ENCODE measurements at regions of chr2 and their contacts with region 1.

Region 1: DNA sequence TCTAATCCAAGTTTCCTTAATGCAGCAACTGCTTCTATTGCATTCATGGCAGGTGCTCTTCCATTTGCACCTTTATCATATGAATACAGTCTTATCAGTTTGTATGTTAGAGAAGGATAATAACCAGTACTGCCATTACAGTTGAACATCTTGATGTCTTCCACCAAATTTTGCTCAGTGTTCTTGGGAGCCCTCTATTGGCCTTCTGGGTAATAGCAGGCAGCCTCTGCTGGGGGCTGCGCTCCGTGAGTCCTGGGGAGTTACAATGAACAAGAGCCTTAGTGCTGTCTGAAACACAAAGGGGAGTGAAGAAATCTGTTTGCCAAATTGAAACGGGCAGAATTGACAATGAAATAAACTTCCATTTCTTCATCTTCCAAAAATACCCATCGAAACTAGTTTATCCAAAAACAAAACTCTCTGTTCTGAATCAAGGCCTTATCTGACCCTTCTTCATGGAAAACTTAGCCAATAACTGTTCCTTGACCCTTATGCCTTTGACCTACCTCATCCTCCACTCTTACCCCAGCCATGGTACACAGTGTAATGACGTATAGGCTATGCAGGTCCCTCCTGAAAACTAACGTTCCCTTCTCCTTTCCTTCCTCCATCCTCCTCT is 79.9 kb downstream of the ALK start:
- DNase-seq: peak; percentile 7
- ATAC-seq: peak; percentile 83
- H3K4me3 ChIP-seq: no peak overlapping the region
- H3K27ac ChIP-seq: no peak overlapping the region
- H3K4me1 ChIP-seq: no peaks in the 10 kb centered on the region
- H3K27me3 ChIP-seq: no peaks in the 10 kb centered on the region; a peak in 1 of 4 replicates
- CTCF ChIP-seq: peak; percentile 90 to 92 (median 90)
- EP300 ChIP-seq: no peak
- POLR2A ChIP-seq: no peak
- RAD21 ChIP-seq: peak; percentile 81

Region 2: GRCh38 chr2:28958689-28959088 is 882.8 kb before region 1 on chr2:
- CTCF ChIA-PET with region 1: no interaction called
- POLR2A ChIA-PET with region 1: no interaction called
- RAD21 ChIA-PET with region 1: no interaction called
- SMC1A ChIA-PET with region 1: no interaction called
- in situ Hi-C with region 1: loop called (anchors 10 kb)
- intact Hi-C with region 1: loop called (anchors 5 kb)
- DNase-seq: peak; percentile 25
- ATAC-seq: peak; percentile 91
- H3K4me3 ChIP-seq: no peak overlapping the region
- H3K27ac ChIP-seq: no peak overlapping the region
- H3K4me1 ChIP-seq: no peaks in the 10 kb centered on the region
- H3K27me3 ChIP-seq: no peaks in the 10 kb centered on the region
- CTCF ChIP-seq: peak; percentile 47 to 74 (median 68); a peak in 5 of 6 replicates
- EP300 ChIP-seq: no peak
- POLR2A ChIP-seq: no peak
- RAD21 ChIP-seq: peak; percentile 95

Region 3: GRCh38 chr2:29519338-29519925 is 322.1 kb before region 1 on chr2:
- CTCF ChIA-PET with region 1: no interaction called
- POLR2A ChIA-PET with region 1: no interaction called
- RAD21 ChIA-PET with region 1: no interaction called
- SMC1A ChIA-PET with region 1: no interaction called
- in situ Hi-C with region 1: no loop called
- intact Hi-C with region 1: no loop called
- DNase-seq: no peak
- ATAC-seq: no peak
- H3K4me3 ChIP-seq: no peak overlapping the region
- H3K27ac ChIP-seq: no peak overlapping the region
- H3K4me1 ChIP-seq: no peaks in the 10 kb centered on the region
- H3K27me3 ChIP-seq: peaks cover 0 to 3% of the 10 kb centered on the region in 2 experiments; a peak in 1 of 4 replicates
- CTCF ChIP-seq: no peak
- EP300 ChIP-seq: no peak
- POLR2A ChIP-seq: no peak
- RAD21 ChIP-seq: no peak

Region 4: DNA sequence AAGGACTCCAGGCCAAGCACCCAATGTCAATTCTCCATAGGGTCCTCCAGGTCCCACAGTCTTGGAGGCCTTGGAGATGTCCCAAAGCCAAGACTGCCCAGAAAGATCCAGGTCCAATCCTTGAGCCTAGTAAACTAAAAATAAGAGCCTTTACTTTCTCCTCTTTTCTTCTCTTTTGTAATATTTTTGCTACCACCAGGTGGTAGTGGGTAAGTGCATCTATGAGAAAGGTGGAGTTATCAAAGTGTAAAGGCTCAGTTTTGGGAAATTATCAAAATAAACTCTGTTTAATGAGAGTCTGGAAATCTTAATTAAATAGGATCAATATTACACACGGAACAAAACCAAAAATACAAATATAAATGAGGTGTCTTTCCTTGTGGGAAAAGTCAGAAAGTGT is 196.5 kb before region 1 on chr2:
- CTCF ChIA-PET with region 1: no interaction called
- POLR2A ChIA-PET with region 1: no interaction called
- RAD21 ChIA-PET with region 1: no interaction called
- SMC1A ChIA-PET with region 1: no interaction called
- in situ Hi-C with region 1: no loop called
- intact Hi-C with region 1: loop called (anchors 5 kb)
- DNase-seq: no peak
- ATAC-seq: no peak
- H3K4me3 ChIP-seq: no peak overlapping the region
- H3K27ac ChIP-seq: no peak overlapping the region
- H3K4me1 ChIP-seq: no peaks in the 10 kb centered on the region
- H3K27me3 ChIP-seq: peaks cover 0 to 3% of the 10 kb centered on the region in 2 experiments; a peak in 1 of 4 replicates
- CTCF ChIP-seq: no peak; a peak in 1 of 6 replicates
- EP300 ChIP-seq: no peak
- POLR2A ChIP-seq: no peak
- RAD21 ChIP-seq: peak; percentile 24; the same call in 1 of the 2 replicates

Region 5: GRCh38 chr2:30165050-30165520 is 323.6 kb after region 1 on chr2:
- CTCF ChIA-PET with region 1: no interaction called
- POLR2A ChIA-PET with region 1: no interaction called
- RAD21 ChIA-PET with region 1: no interaction called
- SMC1A ChIA-PET with region 1: no interaction called
- in situ Hi-C with region 1: no loop called
- intact Hi-C with region 1: no loop called
- DNase-seq: peak; percentile 57
- ATAC-seq: peak; percentile 99
- H3K4me3 ChIP-seq: no peak overlapping the region
- H3K27ac ChIP-seq: no peak overlapping the region
- H3K4me1 ChIP-seq: no peaks in the 10 kb centered on the region; the same call in 1 of the 2 replicates
- H3K27me3 ChIP-seq: peaks cover 0 to 2% of the 10 kb centered on the region in 2 experiments; a peak in 1 of 4 replicates
- CTCF ChIP-seq: peak; percentile 71 to 91 (median 89)
- EP300 ChIP-seq: no peak
- POLR2A ChIP-seq: no peak
- RAD21 ChIP-seq: peak; percentile 92